ENCODE measurements at regions of chr12 and their contacts with region 1.

Region 1: GRCh38 chr12:94545935-94546771 is 86.5 kb upstream of the CEP83 start:
- DNase-seq: no peak
- ATAC-seq: peak; percentile 85
- H3K4me3 ChIP-seq: no peak overlapping the region
- H3K27ac ChIP-seq: no peak overlapping the region
- H3K4me1 ChIP-seq: no peaks in the 10 kb centered on the region
- H3K27me3 ChIP-seq: no peaks in the 10 kb centered on the region

Region 2: GRCh38 chr12:94762259-94762942 is 216.2 kb after region 1 on chr12:
- intact Hi-C with region 1: loop called (anchors 5 to 10 kb)
- DNase-seq: no peak
- ATAC-seq: no peak
- H3K4me3 ChIP-seq: no peak overlapping the region
- H3K27ac ChIP-seq: no peak overlapping the region
- H3K4me1 ChIP-seq: no peaks in the 10 kb centered on the region
- H3K27me3 ChIP-seq: no peaks in the 10 kb centered on the region

Region 3: DNA sequence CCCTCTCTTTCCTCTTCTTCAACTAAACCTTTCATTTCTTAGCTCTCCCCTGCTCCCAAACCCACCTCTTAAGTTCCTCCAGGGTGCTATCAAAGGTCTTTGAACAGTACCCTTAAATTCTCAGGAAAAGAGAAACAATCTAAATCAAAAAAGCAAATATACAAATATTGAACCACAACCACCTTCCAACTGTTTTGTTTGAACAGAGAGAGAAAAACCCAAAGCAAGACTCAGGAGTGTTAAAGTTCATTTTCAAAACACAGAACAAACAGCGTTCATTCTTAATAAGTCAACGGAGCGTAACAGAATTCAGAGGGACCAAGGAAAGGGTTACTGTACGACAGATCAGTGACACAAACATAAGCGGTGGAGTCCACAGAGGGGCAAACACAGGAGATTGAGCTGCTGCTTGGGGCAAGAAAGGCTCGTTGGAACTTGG is 384.1 kb after region 1 on chr12:
- intact Hi-C with region 1: no loop called
- DNase-seq: no peak
- ATAC-seq: no peak
- H3K4me3 ChIP-seq: no peak overlapping the region
- H3K27ac ChIP-seq: no peak overlapping the region
- H3K4me1 ChIP-seq: no peaks in the 10 kb centered on the region
- H3K27me3 ChIP-seq: no peaks in the 10 kb centered on the region

Measured in aorta (tissue), 5 donors.